ENCODE measurements at regions of chr5 and their contacts with region 1.

Region 1: GRCh38 chr5:164235300-164235891 is 730.0 kb downstream of the MAT2B start:
- DNase-seq: peak; percentile 48
- H3K4me3 Mint-ChIP-seq: no peak overlapping the region
- H3K27ac Mint-ChIP-seq: peak overlapping the region; percentile 48
- H3K4me1 Mint-ChIP-seq: peaks cover 35% of the 10 kb centered on the region
- H3K27me3 Mint-ChIP-seq: no peaks in the 10 kb centered on the region
- CTCF ChIP-seq: no peak

Region 2: GRCh38 chr5:164191240-164191639 is 44.2 kb before region 1 on chr5:
- CTCF ChIA-PET with region 1: no interaction called
- intact Hi-C with region 1: loop called (anchors 2 kb)
- DNase-seq: peak; percentile 79
- H3K4me3 Mint-ChIP-seq: no peak overlapping the region
- H3K27ac Mint-ChIP-seq: peak overlapping the region; percentile 74
- H3K4me1 Mint-ChIP-seq: peaks cover 47% of the 10 kb centered on the region
- H3K27me3 Mint-ChIP-seq: no peaks in the 10 kb centered on the region
- CTCF ChIP-seq: no peak

Region 3: GRCh38 chr5:164204338-164204946 is 31.0 kb before region 1 on chr5:
- CTCF ChIA-PET with region 1: interaction called, 3 read pairs
- intact Hi-C with region 1: loop called (anchors 2 kb)
- DNase-seq: peak; percentile 28
- H3K4me3 Mint-ChIP-seq: no peak overlapping the region
- H3K27ac Mint-ChIP-seq: peak overlapping the region; percentile 28
- H3K4me1 Mint-ChIP-seq: peaks cover 44% of the 10 kb centered on the region
- H3K27me3 Mint-ChIP-seq: no peaks in the 10 kb centered on the region
- CTCF ChIP-seq: no peak

Region 4: GRCh38 chr5:164319161-164319560 is 83.8 kb after region 1 on chr5:
- CTCF ChIA-PET with region 1: no interaction called
- intact Hi-C with region 1: no loop called
- DNase-seq: no peak
- H3K4me3 Mint-ChIP-seq: no peak overlapping the region
- H3K27ac Mint-ChIP-seq: no peak overlapping the region
- H3K4me1 Mint-ChIP-seq: no peaks in the 10 kb centered on the region
- H3K27me3 Mint-ChIP-seq: no peaks in the 10 kb centered on the region
- CTCF ChIP-seq: no peak